CD8-positive, alpha-beta memory T cell (primary cell): ENCODE measurements at regions of chr7 and their contacts with region 1.

Region 1: DNA sequence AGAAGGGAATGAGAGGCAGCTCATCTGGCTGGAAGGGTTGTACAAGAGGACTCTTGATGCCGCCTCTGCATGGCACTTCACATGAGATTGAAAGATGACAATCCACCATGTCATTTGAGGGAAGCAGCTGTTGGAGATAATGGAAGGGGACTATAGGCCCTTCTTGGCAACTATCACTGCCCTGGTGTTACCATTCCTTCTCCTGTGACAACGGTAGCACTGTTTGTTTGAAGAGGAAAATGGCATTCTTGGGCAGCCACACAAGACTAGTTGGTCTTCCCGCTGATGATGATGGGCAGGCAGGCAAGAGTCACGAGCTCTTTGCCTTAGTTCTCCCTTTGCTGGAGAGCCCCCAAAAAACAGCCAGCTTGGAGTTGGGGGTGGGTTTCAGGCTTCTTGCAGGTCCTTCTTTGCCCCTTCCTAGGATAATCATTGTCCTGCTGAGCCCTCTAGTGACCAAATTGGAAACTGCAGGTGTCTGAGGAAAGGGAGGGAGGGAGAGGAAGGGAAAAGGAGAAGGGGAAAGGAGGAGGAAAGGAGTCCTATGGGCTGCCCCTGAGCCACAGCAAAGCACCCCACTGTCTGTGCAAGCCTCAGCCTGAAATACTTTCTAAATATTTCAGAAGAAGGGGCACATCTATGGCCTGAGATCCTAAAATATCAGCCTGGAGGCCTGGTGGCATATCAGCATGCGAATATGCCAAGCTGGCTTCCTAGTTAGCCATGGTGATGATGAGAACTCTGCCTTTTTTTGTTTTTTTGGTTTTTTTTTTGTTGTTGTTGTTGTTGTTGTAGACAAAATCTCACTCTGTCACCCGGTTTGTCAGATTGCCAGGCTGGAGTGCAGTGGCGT is 165.6 kb upstream of the KMT2E start:
- DNase-seq: peak; percentile 22 to 57 (median 28)
- H3K4me3 ChIP-seq: no peak overlapping the region
- H3K4me3 Mint-ChIP-seq: no peak overlapping the region
- H3K27ac ChIP-seq: no peak overlapping the region
- H3K27ac Mint-ChIP-seq: no peak overlapping the region
- H3K4me1 ChIP-seq: no peaks in the 10 kb centered on the region
- H3K4me1 Mint-ChIP-seq: no peaks in the 10 kb centered on the region
- H3K27me3 ChIP-seq: no peaks in the 10 kb centered on the region
- H3K27me3 Mint-ChIP-seq: peaks cover 7 to 34% of the 10 kb centered on the region in 2 donors

Region 2: DNA sequence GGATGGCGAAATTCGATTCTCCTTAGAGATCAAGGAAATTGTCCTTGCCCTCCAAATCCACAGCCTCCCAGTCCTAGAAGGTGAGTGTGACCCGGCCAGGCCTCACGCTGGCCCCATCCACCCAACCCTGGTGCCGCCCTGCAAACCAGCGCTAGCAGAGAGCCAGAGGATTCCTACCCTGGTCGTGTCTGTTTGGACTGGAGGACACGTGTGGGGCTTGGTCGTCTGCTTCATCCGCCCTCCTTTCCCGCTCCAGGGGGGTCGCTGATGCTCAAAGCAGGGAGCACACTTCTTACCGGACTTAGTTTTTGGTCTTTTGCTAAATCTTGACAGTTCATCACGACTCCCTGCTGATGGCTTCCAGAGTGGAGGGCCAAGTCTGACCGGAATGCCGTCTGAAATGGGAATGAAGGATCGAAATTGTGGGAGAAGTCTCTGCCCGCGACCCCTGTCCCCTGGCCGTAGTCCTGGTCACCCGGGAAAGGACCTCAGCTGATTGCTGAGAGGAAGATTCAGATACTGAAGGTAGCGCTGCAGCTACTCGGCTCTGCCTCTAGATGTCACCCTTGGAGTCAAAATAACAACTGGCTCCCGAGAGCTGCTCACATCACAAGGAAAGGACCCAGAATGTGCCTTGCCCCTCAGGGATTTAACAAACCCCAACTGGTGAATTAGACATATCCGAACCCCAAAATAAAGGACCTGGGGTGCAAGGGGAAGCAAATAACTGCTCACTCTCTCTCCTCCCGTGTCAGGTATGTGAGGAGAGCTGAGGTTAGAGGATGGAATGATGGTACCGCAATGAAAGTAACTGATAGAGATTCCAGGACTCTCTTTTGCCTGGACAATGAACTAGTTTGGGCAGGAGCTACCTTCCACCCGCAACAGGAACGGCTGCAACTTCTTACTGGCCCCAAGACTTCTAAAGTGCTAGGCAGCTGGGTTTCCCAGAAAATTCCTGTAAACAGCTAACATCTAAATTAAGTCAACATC is 617.0 kb before region 1 on chr7:
- CTCF ChIA-PET with region 1: interaction called, 18 read pairs
- POLR2A ChIA-PET with region 1: no interaction called
- DNase-seq: peak; percentile 4 to 48 (median 24)
- H3K4me3 ChIP-seq: no peak overlapping the region
- H3K4me3 Mint-ChIP-seq: peak overlapping the region in 1 of 7 donors; percentile 6
- H3K27ac ChIP-seq: no peak overlapping the region
- H3K27ac Mint-ChIP-seq: peak overlapping the region in 1 of 8 donors; percentile 59
- H3K4me1 ChIP-seq: no peaks in the 10 kb centered on the region
- H3K4me1 Mint-ChIP-seq: peaks cover 2 to 6% (median 5%) of the 10 kb centered on the region in 3 donors
- H3K27me3 ChIP-seq: no peaks in the 10 kb centered on the region
- H3K27me3 Mint-ChIP-seq: peaks cover 7 to 32% of the 10 kb centered on the region in 2 donors

Region 3: GRCh38 chr7:104825099-104825498 is 23.3 kb before region 1 on chr7:
- CTCF ChIA-PET with region 1: no interaction called
- POLR2A ChIA-PET with region 1: no interaction called
- DNase-seq: no peak
- H3K4me3 ChIP-seq: no peak overlapping the region
- H3K4me3 Mint-ChIP-seq: no peak overlapping the region
- H3K27ac ChIP-seq: no peak overlapping the region
- H3K27ac Mint-ChIP-seq: no peak overlapping the region
- H3K4me1 ChIP-seq: no peaks in the 10 kb centered on the region
- H3K4me1 Mint-ChIP-seq: no peaks in the 10 kb centered on the region
- H3K27me3 ChIP-seq: no peaks in the 10 kb centered on the region
- H3K27me3 Mint-ChIP-seq: no peaks in the 10 kb centered on the region